ENCODE measurements at regions of chr15 and their contacts with region 1.

Region 1: GRCh38 chr15:100341662-100342560 is at the start of gene ADAMTS17:
- DNase-seq: peak; percentile 84 to 93
- H3K4me3 ChIP-seq: peak within 1 kb of the TSS; percentile 66; the same call in 1 of the 2 replicates
- H3K27ac ChIP-seq: no peak within 1 kb of the TSS
- H3K4me1 ChIP-seq: 0 out of 2 replicates have a peak, but pooled peaks cover 5% of the 10 kb centered on the region
- H3K27me3 ChIP-seq: no peaks in the 10 kb centered on the region
- CTCF ChIP-seq: peak; percentile 84
- total RNA-seq, gene ADAMTS17: 2.0 and 3.2 TPM in 2 replicates

Region 2: DNA sequence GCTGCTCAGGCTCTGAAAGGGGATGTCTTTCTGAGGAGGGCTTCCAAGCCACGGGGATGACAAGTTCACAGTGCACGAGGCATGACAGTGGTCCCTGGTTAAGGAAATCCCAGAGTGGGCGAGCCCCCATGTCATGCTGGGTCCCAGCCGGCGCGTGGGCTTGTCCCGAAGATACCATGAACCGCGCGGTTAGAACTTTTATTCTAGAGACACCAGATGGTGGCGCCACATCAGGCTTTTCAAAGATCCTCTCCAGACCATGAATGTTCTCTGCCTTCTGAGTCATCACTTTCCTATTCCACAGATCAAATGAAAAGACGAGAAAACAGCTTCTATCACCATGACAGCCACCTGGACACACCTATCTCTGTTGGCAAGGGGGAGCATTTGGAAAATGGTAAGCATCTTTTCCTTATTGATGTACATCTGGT is 380.9 kb before region 1 on chr15:
- CTCF ChIA-PET with region 1: no interaction called
- POLR2A ChIA-PET with region 1: no interaction called
- intact Hi-C with region 1: loop called (anchors 1 kb)
- DNase-seq: peak; percentile 43 to 46
- H3K4me3 ChIP-seq: no peak overlapping the region
- H3K27ac ChIP-seq: no peak overlapping the region
- H3K4me1 ChIP-seq: no peaks in the 10 kb centered on the region; the same call in 1 of the 2 replicates
- H3K27me3 ChIP-seq: no peaks in the 10 kb centered on the region
- CTCF ChIP-seq: peak; percentile 57

Region 3: DNA sequence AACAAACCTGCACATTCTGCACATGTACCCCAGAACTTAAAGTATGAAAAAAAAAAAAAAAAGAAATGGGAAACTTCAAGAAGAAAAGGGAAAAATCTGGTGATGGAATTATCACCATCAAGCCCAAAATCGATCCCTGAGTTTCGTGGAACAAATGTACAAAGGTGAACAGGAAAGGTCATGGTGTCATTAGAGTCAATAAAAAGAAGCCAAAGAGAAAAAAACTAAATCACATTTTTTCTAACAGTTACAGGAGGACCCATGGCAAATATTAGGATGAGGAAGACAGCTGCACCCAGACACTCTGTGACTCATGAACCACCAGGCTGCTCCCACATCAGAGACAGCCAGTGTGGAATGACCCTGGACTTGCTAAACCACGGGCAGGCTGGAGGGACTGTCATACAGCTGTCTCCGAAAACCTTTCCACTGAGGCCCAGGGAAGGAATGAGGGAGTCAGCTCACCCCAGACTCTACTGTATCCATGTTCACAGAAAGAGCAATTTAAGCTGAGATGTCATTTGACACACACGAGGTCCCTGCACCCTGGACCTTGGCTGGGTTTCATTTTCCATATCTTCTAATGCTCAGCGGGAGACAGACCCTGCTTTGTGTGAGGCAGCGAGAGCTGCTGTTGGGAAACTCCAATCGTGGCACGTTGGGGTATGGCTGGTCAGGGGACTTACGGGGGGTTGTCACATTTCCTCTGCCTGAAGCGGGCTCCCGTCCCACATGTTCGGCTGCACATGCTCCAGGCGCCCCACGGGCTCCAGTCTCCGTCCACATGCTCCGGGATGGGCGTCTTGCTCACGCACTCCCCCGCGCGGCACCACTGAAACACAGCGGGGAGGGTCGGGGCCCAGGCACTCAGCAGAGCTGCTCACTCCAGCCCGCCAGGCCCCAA is 210.3 kb before region 1 on chr15:
- CTCF ChIA-PET with region 1: no interaction called
- POLR2A ChIA-PET with region 1: no interaction called
- intact Hi-C with region 1: loop called (anchors 1 kb)
- DNase-seq: peak in 1 of 2 experiments; percentile 45
- H3K4me3 ChIP-seq: peak overlapping the region; percentile 36; the same call in 1 of the 2 replicates
- H3K27ac ChIP-seq: no peak overlapping the region
- H3K4me1 ChIP-seq: no peaks in the 10 kb centered on the region
- H3K27me3 ChIP-seq: no peaks in the 10 kb centered on the region
- CTCF ChIP-seq: peak; percentile 49

Region 4: GRCh38 chr15:100284701-100285100 is 57.2 kb before region 1 on chr15:
- CTCF ChIA-PET with region 1: no interaction called
- POLR2A ChIA-PET with region 1: no interaction called
- intact Hi-C with region 1: no loop called
- DNase-seq: no peak
- H3K4me3 ChIP-seq: no peak overlapping the region
- H3K27ac ChIP-seq: no peak overlapping the region
- H3K4me1 ChIP-seq: peaks cover 23% of the 10 kb centered on the region
- H3K27me3 ChIP-seq: no peaks in the 10 kb centered on the region
- CTCF ChIP-seq: no peak

Region 5: GRCh38 chr15:100383302-100384107 is 41.6 kb after region 1 on chr15:
- CTCF ChIA-PET with region 1: no interaction called
- POLR2A ChIA-PET with region 1: no interaction called
- intact Hi-C with region 1: loop called (anchors 1 kb)
- DNase-seq: peak; percentile 27 to 39
- H3K4me3 ChIP-seq: no peak overlapping the region
- H3K27ac ChIP-seq: no peak overlapping the region
- H3K4me1 ChIP-seq: no peaks in the 10 kb centered on the region
- H3K27me3 ChIP-seq: peaks cover 51% of the 10 kb centered on the region
- CTCF ChIP-seq: peak; percentile 77

Region 6: DNA sequence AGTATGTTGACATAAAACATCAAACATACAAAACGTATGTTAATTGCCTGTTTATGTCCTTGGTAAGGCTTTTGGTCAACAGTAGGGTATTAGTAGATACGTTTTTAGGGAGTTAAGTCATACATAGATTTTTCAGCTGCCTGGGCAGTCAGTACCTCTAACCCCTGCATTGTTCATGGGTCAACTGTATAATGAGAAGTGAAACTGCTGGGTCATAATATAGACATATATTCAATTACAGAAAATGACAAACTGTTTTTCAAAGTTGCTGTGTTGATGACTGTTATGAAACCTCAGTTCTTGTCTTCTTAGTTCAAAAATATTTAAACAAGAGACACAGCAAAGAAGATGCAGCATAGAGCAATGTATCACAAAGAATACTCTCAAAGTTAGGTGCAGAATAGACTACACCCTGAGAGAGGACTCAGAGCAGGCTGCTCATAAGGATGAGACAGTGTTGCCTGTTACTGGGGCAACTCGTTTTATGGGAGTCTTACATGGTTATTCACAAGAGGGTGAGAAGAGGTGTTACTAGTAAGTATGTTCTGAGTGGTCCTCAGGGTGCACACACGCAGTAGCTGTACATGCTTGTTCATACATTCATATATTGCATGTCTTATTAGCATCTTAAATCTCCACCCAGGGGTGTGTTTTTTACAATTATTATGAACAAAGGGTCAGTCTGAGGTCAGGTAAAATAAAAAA is 53.0 kb after region 1 on chr15:
- CTCF ChIA-PET with region 1: no interaction called
- POLR2A ChIA-PET with region 1: no interaction called
- intact Hi-C with region 1: no loop called
- DNase-seq: no peak
- H3K4me3 ChIP-seq: no peak overlapping the region
- H3K27ac ChIP-seq: no peak overlapping the region
- H3K4me1 ChIP-seq: no peaks in the 10 kb centered on the region
- H3K27me3 ChIP-seq: peaks cover 62% of the 10 kb centered on the region
- CTCF ChIP-seq: no peak

Measured in PC-9 (cell line).